WTC11 (cell line): ENCODE measurements at regions of chr3 and their contacts with region 1.

Region 1: GRCh38 chr3:171614318-171614921 is 154.2 kb upstream of the TNIK start:
- DNase-seq: peak; percentile 68
- ATAC-seq: peak; percentile 96
- H3K4me3 Mint-ChIP-seq: no peak overlapping the region
- H3K27ac Mint-ChIP-seq: no peak overlapping the region
- H3K4me1 Mint-ChIP-seq: no peaks in the 10 kb centered on the region
- H3K27me3 Mint-ChIP-seq: no peaks in the 10 kb centered on the region
- CTCF ChIP-seq: peak; percentile 45; the same call in 1 of the 2 replicates

Region 2: DNA sequence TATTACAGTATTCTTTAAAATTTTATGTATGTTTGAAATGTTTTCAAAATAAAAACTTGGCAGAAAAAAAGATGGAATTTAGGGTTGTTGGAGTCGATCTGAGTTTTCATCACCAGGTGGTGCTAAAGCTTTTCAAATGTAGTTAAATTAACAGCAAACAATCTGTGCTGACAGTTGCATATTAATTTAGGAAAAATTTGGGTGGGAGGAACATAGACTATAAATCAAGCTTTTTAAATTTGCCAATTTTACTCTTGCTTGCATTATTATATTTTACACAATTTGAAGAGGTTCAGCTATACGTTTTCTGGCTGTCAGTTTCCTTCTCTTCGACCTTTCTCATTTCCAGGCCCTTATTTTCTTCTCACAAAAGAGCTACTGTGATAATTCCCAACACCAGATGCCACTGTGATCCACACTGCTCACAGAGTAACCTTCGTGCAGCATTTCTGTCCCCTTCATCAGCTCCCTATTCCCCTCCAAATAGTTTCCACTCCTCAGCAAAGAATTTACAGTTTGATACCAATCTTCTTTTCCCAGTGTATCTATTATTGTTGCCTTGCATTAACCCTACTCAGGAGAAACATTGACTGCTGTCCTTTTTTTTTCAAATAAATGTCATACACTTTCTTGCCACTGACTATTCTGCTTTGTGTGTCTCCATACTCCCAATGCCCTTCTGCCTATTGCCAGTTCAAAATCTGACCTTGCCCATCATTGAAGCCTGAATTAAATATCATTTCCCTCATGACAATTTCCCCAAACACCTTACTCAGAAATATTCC is 652.6 kb before region 1 on chr3:
- CTCF ChIA-PET with region 1: interaction called, 12 read pairs
- POLR2A ChIA-PET with region 1: no interaction called
- DNase-seq: no peak
- ATAC-seq: no peak; the same call in 1 of the 2 replicates
- H3K4me3 Mint-ChIP-seq: no peak overlapping the region
- H3K27ac Mint-ChIP-seq: no peak overlapping the region
- H3K4me1 Mint-ChIP-seq: no peaks in the 10 kb centered on the region
- H3K27me3 Mint-ChIP-seq: no peaks in the 10 kb centered on the region
- CTCF ChIP-seq: peak; percentile 28; the same call in 1 of the 2 replicates

Region 3: DNA sequence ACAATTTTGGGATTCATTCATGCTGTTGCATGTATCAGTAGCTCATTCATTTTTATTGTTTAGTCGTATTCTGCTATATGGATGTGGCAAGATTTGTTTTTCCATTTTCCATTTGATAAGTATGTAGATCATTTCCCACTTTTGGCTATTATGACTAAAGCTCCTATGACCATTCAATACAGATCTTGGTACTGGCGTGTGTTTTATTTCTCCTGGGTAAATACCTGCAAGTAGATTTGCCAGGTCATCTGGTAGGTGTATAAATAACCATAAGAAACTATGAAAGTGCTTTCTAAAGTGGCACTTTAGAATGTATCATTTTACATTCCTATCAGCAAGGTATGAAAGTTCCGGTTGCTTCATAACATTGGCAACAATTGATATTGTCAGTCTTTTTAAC is 278.9 kb before region 1 on chr3:
- CTCF ChIA-PET with region 1: no interaction called
- POLR2A ChIA-PET with region 1: no interaction called
- DNase-seq: no peak
- ATAC-seq: no peak
- H3K4me3 Mint-ChIP-seq: no peak overlapping the region
- H3K27ac Mint-ChIP-seq: no peak overlapping the region
- H3K4me1 Mint-ChIP-seq: peaks cover 60% of the 10 kb centered on the region
- H3K27me3 Mint-ChIP-seq: no peaks in the 10 kb centered on the region
- CTCF ChIP-seq: no peak

Region 4: DNA sequence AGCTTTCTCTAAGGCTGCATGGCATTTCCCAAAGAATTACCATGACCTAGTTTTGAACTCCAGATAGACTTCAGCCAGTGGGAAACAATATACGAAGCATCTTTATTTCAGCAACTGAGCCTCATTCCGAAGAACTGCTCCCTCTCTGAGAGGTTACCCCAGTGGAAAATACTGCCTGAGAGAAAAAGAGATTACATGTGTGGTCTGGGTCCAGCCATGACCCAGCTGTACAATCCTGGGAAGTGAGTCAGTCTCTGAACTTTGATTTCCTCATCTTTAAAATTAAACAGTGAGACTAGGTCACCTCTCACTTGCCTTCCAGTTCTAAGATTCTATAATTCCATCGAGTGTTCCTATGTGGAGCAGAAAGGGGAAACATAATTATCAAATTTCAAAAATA is 196.6 kb before region 1 on chr3:
- CTCF ChIA-PET with region 1: no interaction called
- POLR2A ChIA-PET with region 1: no interaction called
- DNase-seq: no peak
- ATAC-seq: no peak
- H3K4me3 Mint-ChIP-seq: no peak overlapping the region
- H3K27ac Mint-ChIP-seq: 0 out of 2 replicates have a peak overlapping the region, but pooled peaks have one; percentile 28
- H3K4me1 Mint-ChIP-seq: peaks cover 53% of the 10 kb centered on the region
- H3K27me3 Mint-ChIP-seq: no peaks in the 10 kb centered on the region
- CTCF ChIP-seq: no peak

Region 5: GRCh38 chr3:171600030-171600429 is 14.4 kb before region 1 on chr3:
- CTCF ChIA-PET with region 1: interaction called, 27 read pairs
- POLR2A ChIA-PET with region 1: no interaction called
- DNase-seq: no peak
- ATAC-seq: no peak
- H3K4me3 Mint-ChIP-seq: no peak overlapping the region
- H3K27ac Mint-ChIP-seq: no peak overlapping the region
- H3K4me1 Mint-ChIP-seq: no peaks in the 10 kb centered on the region
- H3K27me3 Mint-ChIP-seq: no peaks in the 10 kb centered on the region
- CTCF ChIP-seq: no peak

Region 6: GRCh38 chr3:171646357-171647133 is 32.1 kb after region 1 on chr3:
- CTCF ChIA-PET with region 1: interaction called, 12 read pairs
- POLR2A ChIA-PET with region 1: no interaction called
- DNase-seq: no peak
- ATAC-seq: peak; percentile 43
- H3K4me3 Mint-ChIP-seq: no peak overlapping the region
- H3K27ac Mint-ChIP-seq: no peak overlapping the region
- H3K4me1 Mint-ChIP-seq: no peaks in the 10 kb centered on the region
- H3K27me3 Mint-ChIP-seq: no peaks in the 10 kb centered on the region
- CTCF ChIP-seq: peak; percentile 25

Region 7: GRCh38 chr3:171829841-171830517 is 215.6 kb after region 1 on chr3:
- CTCF ChIA-PET with region 1: interaction called, 18 read pairs
- POLR2A ChIA-PET with region 1: no interaction called
- DNase-seq: peak; percentile 78
- ATAC-seq: peak; percentile 98
- H3K4me3 Mint-ChIP-seq: no peak overlapping the region
- H3K27ac Mint-ChIP-seq: no peak overlapping the region
- H3K4me1 Mint-ChIP-seq: peaks cover 36% of the 10 kb centered on the region
- H3K27me3 Mint-ChIP-seq: peaks cover 3% of the 10 kb centered on the region; the same call in 1 of the 2 replicates
- CTCF ChIP-seq: peak; percentile 34; the same call in 1 of the 2 replicates